BJ (cell line): ENCODE measurements at regions of chr1 and their contacts with region 1.

Region 1: DNA sequence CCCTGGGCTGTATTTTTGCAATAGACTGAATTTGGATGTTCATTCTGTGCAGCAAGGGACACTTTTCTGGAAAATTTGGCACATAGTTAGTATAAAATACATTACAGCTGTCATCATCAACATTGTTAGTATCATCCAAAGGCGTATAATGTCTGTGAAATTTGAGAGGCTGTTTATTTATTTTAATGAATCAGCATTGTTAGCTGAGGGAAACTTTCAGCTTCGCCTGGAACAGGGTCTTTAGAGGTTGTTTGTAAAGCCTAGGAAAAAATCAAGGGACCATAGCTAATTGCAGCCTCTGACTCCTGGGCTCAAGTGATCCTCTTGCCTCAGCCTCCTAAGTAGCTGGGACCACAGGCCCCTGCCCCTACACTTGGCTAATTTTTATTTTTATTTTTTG is 106.8 kb upstream of the USP24 start:
- DNase-seq: peak; percentile 25
- H3K4me3 ChIP-seq: no peak overlapping the region
- H3K27me3 ChIP-seq: no peaks in the 10 kb centered on the region
- CTCF ChIP-seq: no peak

Region 2: DNA sequence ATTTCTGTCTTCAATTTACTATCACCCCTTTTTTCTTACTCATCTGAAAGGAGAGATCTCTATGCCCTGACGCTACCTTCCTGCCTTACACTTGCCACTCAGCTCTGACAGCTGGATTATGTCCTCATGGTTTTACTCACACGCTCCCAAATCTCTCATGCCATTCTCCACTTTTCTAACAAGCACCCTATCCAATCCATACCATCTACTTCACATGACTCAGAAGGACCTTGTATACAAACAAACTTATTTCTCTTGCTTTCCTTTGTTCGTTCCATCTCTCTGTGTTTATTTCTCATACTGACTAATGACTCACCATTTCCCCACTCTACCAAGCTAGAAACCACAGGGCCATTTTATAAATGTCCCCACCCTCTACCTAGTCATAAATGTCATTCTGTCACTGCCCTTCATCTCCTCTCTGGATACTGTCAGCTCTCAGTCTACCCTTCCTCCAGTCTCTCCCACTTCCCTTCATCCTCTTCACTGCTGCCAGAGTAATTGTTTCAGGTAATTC is 194.1 kb before region 1 on chr1:
- CTCF ChIA-PET with region 1: no interaction called
- POLR2A ChIA-PET with region 1: no interaction called
- DNase-seq: no peak
- H3K4me3 ChIP-seq: no peak overlapping the region
- H3K27me3 ChIP-seq: no peaks in the 10 kb centered on the region
- CTCF ChIP-seq: no peak

Region 3: GRCh38 chr1:55337801-55338447 is 16.0 kb after region 1 on chr1:
- CTCF ChIA-PET with region 1: interaction called, 12 read pairs
- POLR2A ChIA-PET with region 1: no interaction called
- DNase-seq: no peak
- H3K4me3 ChIP-seq: no peak overlapping the region
- H3K27me3 ChIP-seq: no peaks in the 10 kb centered on the region
- CTCF ChIP-seq: peak; percentile 65

Region 4: DNA sequence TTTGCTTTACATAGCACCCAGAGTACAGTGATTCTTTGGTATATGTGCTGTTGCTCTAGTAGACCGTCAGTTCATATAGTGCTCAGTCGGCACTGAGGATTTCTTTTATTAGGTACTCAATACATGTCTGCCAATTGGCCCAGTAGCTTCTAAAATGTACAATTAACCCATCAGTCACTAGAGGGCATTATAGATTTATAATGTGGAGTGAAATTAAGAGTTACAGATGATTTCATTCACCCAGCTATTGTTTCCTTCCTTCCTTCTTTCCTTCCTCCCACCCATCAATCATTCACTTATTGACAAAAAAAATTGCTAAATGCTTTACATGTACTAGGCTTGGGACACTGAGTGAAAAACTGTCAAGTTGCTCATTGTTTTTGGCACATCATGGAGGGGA is 156.8 kb after region 1 on chr1:
- CTCF ChIA-PET with region 1: no interaction called
- POLR2A ChIA-PET with region 1: no interaction called
- DNase-seq: no peak
- H3K4me3 ChIP-seq: no peak overlapping the region
- H3K27me3 ChIP-seq: no peaks in the 10 kb centered on the region
- CTCF ChIP-seq: 0 out of 2 replicates have a peak, but pooled peaks have one; percentile 11

Region 5: GRCh38 chr1:55775007-55775406 is 453.1 kb after region 1 on chr1:
- CTCF ChIA-PET with region 1: no interaction called
- POLR2A ChIA-PET with region 1: interaction called, 11 read pairs
- DNase-seq: peak; percentile 14
- H3K4me3 ChIP-seq: no peak overlapping the region
- H3K27me3 ChIP-seq: no peaks in the 10 kb centered on the region
- CTCF ChIP-seq: no peak